ENCODE measurements at regions of chr1 and their contacts with region 1.

Region 1: GRCh38 chr1:156020292-156021089 is at the start of gene SSR2:
- DNase-seq: peak; percentile 95
- H3K4me3 ChIP-seq: peak within 1 kb of the TSS; percentile 80
- H3K27ac ChIP-seq: peak within 1 kb of the TSS; percentile 13
- H3K4me1 ChIP-seq: peaks cover 11% of the 10 kb centered on the region
- CTCF ChIP-seq: no peak
- total RNA-seq, gene SSR2: 109 and 147 TPM in 2 replicates

Region 2: DNA sequence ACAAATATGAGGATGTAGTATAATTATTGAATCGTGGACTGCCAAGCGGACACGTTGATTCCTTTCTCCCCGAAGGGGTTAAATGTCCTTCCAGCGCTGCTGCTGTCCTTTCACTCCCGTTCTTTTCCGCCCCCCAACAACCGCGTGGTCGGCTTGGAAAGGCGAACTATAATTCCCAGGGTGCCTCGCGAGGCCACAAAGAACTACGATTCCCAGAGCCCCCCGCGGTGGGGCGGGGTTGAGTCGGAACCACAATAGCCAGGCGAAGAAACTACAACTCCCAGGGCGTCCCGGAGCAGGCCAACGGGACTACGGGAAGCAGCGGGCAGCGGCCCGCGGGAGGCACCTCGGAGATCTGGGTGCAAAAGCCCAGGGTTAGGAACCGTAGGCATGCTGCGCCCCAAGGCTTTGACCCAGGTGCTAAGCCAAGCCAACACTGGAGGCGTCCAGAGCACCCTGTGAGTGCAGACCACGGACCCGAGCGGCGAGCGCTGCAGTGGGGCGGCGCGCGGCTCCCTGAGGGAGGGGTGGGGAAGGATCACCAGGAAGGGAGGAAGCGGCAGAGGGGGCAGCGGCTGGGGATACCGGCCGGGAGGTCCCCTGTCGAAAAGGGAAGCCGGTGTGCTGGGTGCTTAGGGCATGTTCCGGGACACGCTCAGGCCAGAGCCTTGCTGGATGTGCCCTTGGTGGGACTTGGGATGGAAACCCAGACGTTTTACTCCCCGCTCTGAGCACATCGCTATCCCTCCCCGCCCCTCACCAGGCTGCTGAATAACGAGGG is 34.2 kb after region 1 on chr1 and contains the start of gene LAMTOR2:
- CTCF ChIA-PET with region 1: no interaction called
- POLR2A ChIA-PET with region 1: no interaction called
- intact Hi-C with region 1: loop called (anchors 2 kb)
- DNase-seq: peak; percentile 97
- H3K4me3 ChIP-seq: peak within 1 kb of the TSS; percentile 81
- H3K27ac ChIP-seq: peak within 1 kb of the TSS; percentile 86
- H3K4me1 ChIP-seq: peaks cover 21% of the 10 kb centered on the region
- CTCF ChIP-seq: no peak
- total RNA-seq, gene LAMTOR2: 71.3 and 103 TPM in 2 replicates